CD8-positive, alpha-beta T cell (primary cell): ENCODE measurements at regions of chr10 and their contacts with region 1.

Region 1: DNA sequence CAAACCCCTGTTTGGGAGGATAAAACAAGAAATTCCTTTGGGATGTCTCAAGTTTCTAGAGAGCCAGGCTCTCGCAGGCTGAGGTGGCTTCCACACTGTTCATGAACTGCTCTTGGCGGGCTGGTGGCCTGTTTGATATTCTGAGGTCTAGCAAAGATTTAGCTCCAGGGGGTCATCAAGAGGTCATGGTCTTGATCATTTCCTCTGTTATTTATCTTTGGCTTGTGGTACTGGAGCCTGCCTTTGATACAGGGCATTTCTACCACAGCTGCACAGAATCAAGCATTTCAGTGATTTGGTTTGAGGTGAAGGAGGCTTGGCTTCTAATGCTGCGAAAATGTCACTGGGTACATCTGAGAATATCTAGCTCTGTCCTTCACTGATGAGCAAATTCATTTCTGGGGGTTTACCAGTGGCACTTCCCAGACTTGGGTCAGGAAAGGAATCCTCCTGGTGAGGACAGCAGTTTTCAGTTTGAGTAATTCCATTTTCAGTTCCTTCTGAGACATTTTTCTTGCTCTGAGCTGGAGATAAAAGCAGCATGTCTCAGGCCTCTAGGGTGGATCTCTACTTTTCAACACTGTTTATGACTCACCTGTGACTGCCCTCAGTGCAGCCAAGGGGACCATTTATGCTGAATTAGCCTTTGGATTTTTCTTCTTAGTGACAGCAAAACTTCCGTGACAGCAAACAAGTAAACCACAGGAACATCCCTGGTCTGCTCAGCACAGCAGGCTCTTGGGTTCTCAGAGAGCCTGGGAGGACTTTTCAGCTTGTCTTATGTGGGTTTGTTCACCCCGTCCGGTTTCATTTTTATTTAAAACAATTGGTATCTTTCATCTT is 312.0 kb downstream of the RNLS start:
- DNase-seq: peak in 7 of 9 experiments; percentile 14 to 72 (median 28)
- ATAC-seq: peak; percentile 72
- H3K4me3 ChIP-seq: no peak overlapping the region
- H3K4me3 Mint-ChIP-seq: peak overlapping the region; percentile 69
- H3K27ac ChIP-seq: peak overlapping the region in 1 of 2 experiments; percentile 47
- H3K27ac Mint-ChIP-seq: peak overlapping the region; percentile 88
- H3K4me1 ChIP-seq: peaks cover 26% of the 10 kb centered on the region
- H3K4me1 Mint-ChIP-seq: peaks cover 41% of the 10 kb centered on the region
- H3K27me3 ChIP-seq: no peaks in the 10 kb centered on the region
- H3K27me3 Mint-ChIP-seq: no peaks in the 10 kb centered on the region
- CTCF ChIP-seq: no peak

Region 2: DNA sequence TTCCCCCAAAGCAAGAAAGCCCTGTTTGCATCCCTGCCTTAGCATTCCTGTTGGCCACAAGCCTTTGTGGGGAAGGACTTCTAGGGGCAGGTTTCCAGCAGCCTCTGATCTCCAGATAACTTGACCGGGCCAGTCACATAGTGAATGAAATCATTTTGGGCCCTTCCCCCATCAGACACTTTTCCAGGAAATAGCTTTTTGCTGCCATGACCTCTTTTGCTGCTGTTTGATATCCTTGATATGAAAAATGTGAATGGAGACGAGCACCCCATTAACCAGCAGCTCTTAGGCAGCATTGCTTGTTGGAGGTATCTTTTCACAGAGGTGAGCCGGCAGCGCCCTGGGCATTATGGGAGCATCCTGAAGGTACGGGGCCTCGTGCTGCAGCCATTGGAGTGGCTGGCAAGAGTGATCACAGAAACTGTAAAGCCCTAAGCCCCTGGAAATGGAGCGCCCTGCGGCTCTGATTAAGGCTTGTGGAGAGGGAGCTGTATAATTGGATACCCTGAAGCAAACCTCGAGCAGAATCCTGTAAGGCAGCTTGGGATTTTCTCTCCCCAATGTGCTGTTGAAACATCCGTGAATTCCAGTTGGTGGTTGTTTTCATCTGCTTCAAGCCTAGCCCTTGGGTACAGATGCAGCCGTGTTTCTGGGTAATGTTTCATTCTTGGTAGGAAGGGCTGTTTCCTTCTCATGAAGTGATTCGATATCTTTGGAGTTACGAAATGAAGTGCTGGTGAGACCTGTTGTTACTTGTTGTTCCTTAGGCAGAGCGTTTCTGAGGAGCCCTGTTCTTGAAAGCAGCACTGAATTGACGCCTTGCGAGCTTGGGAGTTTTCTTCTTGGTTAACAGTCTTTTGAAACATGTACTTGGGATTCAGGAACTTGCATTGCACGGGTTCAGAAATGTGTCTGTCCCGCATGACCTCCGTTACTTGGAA is 228.7 kb before region 1 on chr10:
- CTCF ChIA-PET with region 1: no interaction called
- POLR2A ChIA-PET with region 1: no interaction called
- intact Hi-C with region 1: no loop called
- DNase-seq: no peak
- ATAC-seq: no peak
- H3K4me3 ChIP-seq: no peak overlapping the region
- H3K4me3 Mint-ChIP-seq: no peak overlapping the region
- H3K27ac ChIP-seq: no peak overlapping the region
- H3K27ac Mint-ChIP-seq: no peak overlapping the region
- H3K4me1 ChIP-seq: peaks cover 6% of the 10 kb centered on the region
- H3K4me1 Mint-ChIP-seq: peaks cover 23% of the 10 kb centered on the region
- H3K27me3 ChIP-seq: no peaks in the 10 kb centered on the region
- H3K27me3 Mint-ChIP-seq: no peaks in the 10 kb centered on the region
- CTCF ChIP-seq: no peak

Region 3: DNA sequence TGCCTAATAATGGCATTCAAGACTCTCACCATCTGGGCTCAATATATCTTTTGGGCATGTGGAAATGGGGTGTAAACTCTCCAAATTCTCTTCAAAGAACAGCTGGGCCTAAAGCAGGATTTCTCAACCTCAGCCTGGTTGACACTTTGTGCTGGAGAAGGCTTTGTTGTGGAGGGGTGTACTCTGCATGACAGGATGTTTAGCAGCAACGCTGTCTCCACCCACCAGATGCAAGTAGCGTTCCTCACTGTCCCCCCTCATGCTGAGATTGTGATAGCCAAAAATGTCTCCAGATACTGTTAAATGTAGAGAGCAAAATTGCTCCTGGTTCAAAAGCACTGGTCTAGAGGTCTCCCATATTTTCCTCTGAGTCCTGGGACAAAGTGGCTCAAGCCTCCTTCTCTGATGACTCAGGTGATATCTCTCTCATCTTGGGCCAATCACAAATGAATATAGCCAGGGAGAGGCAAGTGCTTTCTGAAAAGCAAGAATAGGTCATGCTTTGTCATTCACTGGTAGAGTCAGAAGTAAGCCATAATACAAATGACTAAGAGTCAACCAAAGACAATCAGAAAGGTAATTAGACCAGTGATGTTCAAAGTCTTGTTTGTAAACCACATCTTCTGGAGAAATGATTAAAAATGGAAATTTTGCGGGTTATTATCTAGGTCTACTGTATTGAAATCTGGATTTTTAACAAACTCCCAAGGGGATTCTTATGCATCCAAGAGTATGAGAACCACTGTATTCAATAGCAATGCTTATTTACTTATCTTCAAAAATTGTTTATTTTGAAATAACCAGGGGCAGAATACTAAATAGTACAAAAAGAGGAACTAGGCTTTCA is 76.8 kb before region 1 on chr10:
- CTCF ChIA-PET with region 1: no interaction called
- POLR2A ChIA-PET with region 1: no interaction called
- intact Hi-C with region 1: loop called in 1 of 2 experiments (anchors 5 kb)
- DNase-seq: peak; percentile 22 to 83 (median 48)
- ATAC-seq: peak; percentile 96
- H3K4me3 ChIP-seq: no peak overlapping the region
- H3K4me3 Mint-ChIP-seq: peak overlapping the region; percentile 36
- H3K27ac ChIP-seq: peak overlapping the region; percentile 23 to 51
- H3K27ac Mint-ChIP-seq: peak overlapping the region; percentile 89
- H3K4me1 ChIP-seq: peaks cover 35% of the 10 kb centered on the region
- H3K4me1 Mint-ChIP-seq: peaks cover 56% of the 10 kb centered on the region
- H3K27me3 ChIP-seq: no peaks in the 10 kb centered on the region
- H3K27me3 Mint-ChIP-seq: no peaks in the 10 kb centered on the region
- CTCF ChIP-seq: no peak

Region 4: DNA sequence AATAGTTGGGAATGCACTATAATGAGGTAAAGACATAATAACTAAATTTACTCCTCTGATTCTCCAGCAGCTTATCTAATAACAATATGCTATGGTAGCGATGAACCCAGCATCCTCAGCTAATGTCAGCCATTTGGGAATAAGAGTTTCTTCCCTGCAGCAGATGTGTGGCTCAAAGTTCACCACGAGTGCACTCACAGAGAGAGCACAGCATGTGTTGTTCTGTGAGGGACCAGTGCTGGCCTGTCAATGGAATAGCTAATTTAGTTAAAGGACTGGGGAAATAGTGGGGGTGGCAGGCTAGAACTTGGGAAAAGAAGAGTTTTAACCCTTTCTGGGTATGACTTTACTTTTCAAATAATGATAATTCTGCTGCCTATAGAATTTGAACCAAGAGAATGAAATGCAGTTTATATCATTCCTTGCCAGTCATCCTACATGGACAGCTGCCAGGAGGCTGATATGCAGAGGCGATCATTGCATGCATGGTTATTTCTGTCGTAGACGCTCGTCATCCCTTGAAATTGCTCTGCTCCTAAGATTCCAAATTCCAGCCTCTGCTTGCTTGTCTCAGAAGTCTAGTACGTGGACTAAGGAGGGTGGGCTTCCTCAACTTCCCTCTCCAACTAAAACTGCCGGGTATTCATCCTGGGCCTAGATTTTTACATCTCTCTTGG is 43.6 kb before region 1 on chr10:
- CTCF ChIA-PET with region 1: no interaction called
- POLR2A ChIA-PET with region 1: no interaction called
- intact Hi-C with region 1: no loop called
- DNase-seq: no peak
- ATAC-seq: no peak
- H3K4me3 ChIP-seq: no peak overlapping the region
- H3K4me3 Mint-ChIP-seq: no peak overlapping the region
- H3K27ac ChIP-seq: no peak overlapping the region
- H3K27ac Mint-ChIP-seq: no peak overlapping the region
- H3K4me1 ChIP-seq: no peaks in the 10 kb centered on the region
- H3K4me1 Mint-ChIP-seq: no peaks in the 10 kb centered on the region
- H3K27me3 ChIP-seq: no peaks in the 10 kb centered on the region
- H3K27me3 Mint-ChIP-seq: no peaks in the 10 kb centered on the region
- CTCF ChIP-seq: no peak

Region 5: GRCh38 chr10:88288320-88289059 is 17.4 kb after region 1 on chr10:
- CTCF ChIA-PET with region 1: no interaction called
- POLR2A ChIA-PET with region 1: no interaction called
- intact Hi-C with region 1: no loop called
- DNase-seq: no peak
- ATAC-seq: no peak
- H3K4me3 ChIP-seq: no peak overlapping the region
- H3K4me3 Mint-ChIP-seq: no peak overlapping the region
- H3K27ac ChIP-seq: no peak overlapping the region
- H3K27ac Mint-ChIP-seq: no peak overlapping the region
- H3K4me1 ChIP-seq: no peaks in the 10 kb centered on the region
- H3K4me1 Mint-ChIP-seq: no peaks in the 10 kb centered on the region
- H3K27me3 ChIP-seq: no peaks in the 10 kb centered on the region
- H3K27me3 Mint-ChIP-seq: no peaks in the 10 kb centered on the region
- CTCF ChIP-seq: no peak